A673 (cell line): ENCODE measurements at regions of chr12 and their contacts with region 1.

Region 1: DNA sequence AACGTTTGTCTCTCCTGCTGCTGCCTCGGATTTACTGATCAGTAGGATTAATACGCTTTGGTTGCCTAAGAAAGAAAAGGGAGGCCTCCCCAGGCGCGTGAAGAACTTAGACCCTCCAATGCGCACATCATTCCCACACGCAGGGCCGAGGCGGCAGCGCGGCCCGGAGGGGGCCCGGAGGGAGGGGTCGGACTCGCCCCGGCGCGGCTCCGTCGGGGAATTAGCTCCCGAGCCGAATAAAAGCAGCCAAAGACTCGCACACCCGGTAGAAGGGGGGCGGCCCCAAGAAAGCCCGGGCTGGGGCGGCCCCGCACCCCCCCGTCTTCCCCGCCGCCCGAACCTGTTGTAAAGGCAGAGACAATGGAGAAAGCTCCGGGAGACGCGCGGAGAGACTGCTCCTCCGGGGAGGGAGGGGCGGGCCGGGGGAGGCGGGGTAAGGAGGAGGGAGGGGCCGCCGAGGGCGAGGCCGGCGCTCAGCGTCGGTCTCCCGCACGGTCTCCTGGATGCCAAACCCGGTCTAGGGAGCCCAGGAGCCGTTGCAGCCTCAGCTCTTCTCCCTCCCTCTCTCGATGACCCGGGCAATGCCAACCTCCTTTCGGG is at the start of gene NELL2:
- DNase-seq: peak; percentile 96
- H3K4me3 ChIP-seq: peak within 1 kb of the TSS; percentile 95
- H3K27ac ChIP-seq: peak within 1 kb of the TSS; percentile 96
- H3K4me1 ChIP-seq: peaks cover 15% of the 10 kb centered on the region
- H3K27me3 ChIP-seq: no peaks in the 10 kb centered on the region
- CTCF ChIP-seq: no peak
- total RNA-seq, gene NELL2: 596 and 641 TPM in 2 replicates

Region 2: GRCh38 chr12:44317651-44318126 is 558.4 kb before region 1 on chr12:
- CTCF ChIA-PET with region 1: interaction called, 3 read pairs
- POLR2A ChIA-PET with region 1: no interaction called
- intact Hi-C with region 1: loop called (anchors 5 kb)
- DNase-seq: peak; percentile 81
- H3K4me3 ChIP-seq: no peak overlapping the region
- H3K27ac ChIP-seq: no peak overlapping the region
- H3K4me1 ChIP-seq: peaks cover 31% of the 10 kb centered on the region
- H3K27me3 ChIP-seq: no peaks in the 10 kb centered on the region
- CTCF ChIP-seq: peak; percentile 67

Region 3: GRCh38 chr12:44509471-44509870 is 366.6 kb before region 1 on chr12:
- CTCF ChIA-PET with region 1: no interaction called
- POLR2A ChIA-PET with region 1: no interaction called
- intact Hi-C with region 1: loop called (anchors 5 kb)
- DNase-seq: peak; percentile 42
- H3K4me3 ChIP-seq: no peak overlapping the region
- H3K27ac ChIP-seq: peak overlapping the region; percentile 7
- H3K4me1 ChIP-seq: peaks cover 56% of the 10 kb centered on the region
- H3K27me3 ChIP-seq: no peaks in the 10 kb centered on the region
- CTCF ChIP-seq: no peak

Region 4: DNA sequence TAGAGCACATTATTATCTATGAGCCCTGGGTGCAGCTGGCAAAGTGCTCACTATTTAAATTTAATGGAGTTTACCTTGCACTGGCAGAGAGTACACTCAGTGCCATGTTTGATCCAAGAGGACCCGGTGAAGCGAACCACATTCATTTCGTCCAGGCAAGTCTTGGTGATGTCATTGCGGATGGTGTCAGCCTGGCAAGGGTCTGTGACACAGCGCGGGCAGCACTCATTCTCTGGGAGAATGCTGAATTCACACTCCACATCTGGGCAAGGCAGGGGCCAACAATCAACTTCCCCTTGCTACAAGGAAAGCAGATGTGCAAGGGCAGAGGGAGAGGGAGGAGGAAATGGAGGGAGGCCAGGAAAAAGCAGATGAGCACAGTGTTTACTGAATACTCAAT is 356.1 kb before region 1 on chr12:
- CTCF ChIA-PET with region 1: no interaction called
- POLR2A ChIA-PET with region 1: interaction called, 11 read pairs
- intact Hi-C with region 1: no loop called
- DNase-seq: no peak
- H3K4me3 ChIP-seq: no peak overlapping the region
- H3K27ac ChIP-seq: no peak overlapping the region
- H3K4me1 ChIP-seq: no peaks in the 10 kb centered on the region
- H3K27me3 ChIP-seq: no peaks in the 10 kb centered on the region
- CTCF ChIP-seq: no peak

Region 5: GRCh38 chr12:44709166-44709565 is 166.9 kb before region 1 on chr12:
- CTCF ChIA-PET with region 1: no interaction called
- POLR2A ChIA-PET with region 1: no interaction called
- intact Hi-C with region 1: loop called (anchors 10 kb)
- DNase-seq: peak; percentile 65
- H3K4me3 ChIP-seq: no peak overlapping the region
- H3K27ac ChIP-seq: peak overlapping the region; percentile 5
- H3K4me1 ChIP-seq: peaks cover 31% of the 10 kb centered on the region
- H3K27me3 ChIP-seq: no peaks in the 10 kb centered on the region
- CTCF ChIP-seq: no peak

Region 6: DNA sequence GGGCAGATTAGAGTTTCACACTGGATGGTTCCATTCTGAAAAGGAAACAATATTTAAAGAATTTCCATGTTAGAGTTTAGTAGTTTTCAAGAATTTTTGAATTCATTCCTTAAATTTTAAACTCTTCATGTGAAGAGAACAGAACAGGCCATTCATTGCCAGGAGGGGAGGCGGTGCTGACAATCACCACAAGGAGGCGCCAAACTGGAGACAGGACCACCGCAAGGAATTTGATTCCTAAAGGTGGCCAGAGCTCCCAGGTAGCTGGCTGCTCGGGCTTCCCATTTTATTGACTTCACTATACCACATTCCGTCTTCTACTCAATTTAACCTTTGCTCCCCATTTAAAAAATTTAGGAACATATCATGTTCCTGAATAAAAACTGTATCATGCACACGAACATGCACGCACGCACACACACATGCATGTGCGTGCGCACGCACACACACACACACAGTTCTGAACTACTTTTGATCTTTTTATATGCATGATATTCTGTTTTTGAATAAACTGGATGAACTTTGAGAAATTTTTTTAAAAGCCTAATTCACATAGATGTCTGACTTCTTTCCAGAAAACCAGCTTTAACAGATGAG is 101.1 kb before region 1 on chr12:
- CTCF ChIA-PET with region 1: interaction called, 5 read pairs
- POLR2A ChIA-PET with region 1: no interaction called
- intact Hi-C with region 1: loop called (anchors 5 kb)
- DNase-seq: peak; percentile 58
- H3K4me3 ChIP-seq: no peak overlapping the region
- H3K27ac ChIP-seq: no peak overlapping the region
- H3K4me1 ChIP-seq: peaks cover 68% of the 10 kb centered on the region
- H3K27me3 ChIP-seq: no peaks in the 10 kb centered on the region
- CTCF ChIP-seq: peak; percentile 85

Region 7: DNA sequence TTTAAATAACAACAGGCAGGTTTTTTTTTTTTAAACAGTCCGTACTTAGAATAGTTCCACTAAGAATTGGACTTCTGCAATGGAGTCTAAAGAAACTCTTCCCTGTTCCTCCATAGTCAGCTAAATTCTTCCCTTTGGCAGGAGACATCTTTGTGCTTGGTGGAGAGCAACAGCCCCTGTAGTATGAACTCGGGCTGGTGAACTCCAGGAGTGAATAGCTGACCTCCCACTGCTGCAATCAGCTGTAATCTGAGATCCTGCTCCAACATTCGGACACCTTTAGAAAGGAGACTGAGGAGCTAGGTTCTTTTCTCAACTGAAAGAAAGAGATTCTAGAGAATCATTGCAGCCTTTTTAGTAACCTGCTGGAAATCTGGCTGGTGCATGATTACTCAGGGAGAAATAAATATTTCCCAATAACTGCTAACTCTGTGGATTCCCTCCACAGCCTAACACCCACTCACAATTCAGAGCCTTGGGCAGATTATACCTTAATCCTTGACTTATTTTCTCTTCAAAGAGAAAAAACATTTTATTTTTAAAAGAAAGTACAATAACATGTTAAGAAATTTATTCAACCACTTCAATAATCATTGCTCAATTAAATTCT is 200.5 kb after region 1 on chr12:
- CTCF ChIA-PET with region 1: no interaction called
- POLR2A ChIA-PET with region 1: no interaction called
- intact Hi-C with region 1: no loop called
- DNase-seq: no peak
- H3K4me3 ChIP-seq: no peak overlapping the region
- H3K27ac ChIP-seq: no peak overlapping the region
- H3K4me1 ChIP-seq: no peaks in the 10 kb centered on the region
- H3K27me3 ChIP-seq: no peaks in the 10 kb centered on the region
- CTCF ChIP-seq: no peak

Region 8: GRCh38 chr12:45130881-45131281 is 254.8 kb after region 1 on chr12:
- CTCF ChIA-PET with region 1: no interaction called
- POLR2A ChIA-PET with region 1: no interaction called
- intact Hi-C with region 1: no loop called
- DNase-seq: peak; percentile 84
- H3K4me3 ChIP-seq: no peak overlapping the region
- H3K27ac ChIP-seq: no peak overlapping the region
- H3K4me1 ChIP-seq: no peaks in the 10 kb centered on the region
- H3K27me3 ChIP-seq: no peaks in the 10 kb centered on the region
- CTCF ChIP-seq: peak; percentile 85